Activated CD4-positive, alpha-beta T cell treated with anti-CD3 and anti-CD28 coated beads for 36 hours (primary cell): ENCODE measurements at regions of chr1 and their contacts with region 1.

Region 1: GRCh38 chr1:234065794-234066447 is 161.4 kb downstream of the SLC35F3 start:
- DNase-seq: peak; percentile 84
- ATAC-seq: peak; percentile 47
- H3K4me3 Mint-ChIP-seq: no peak overlapping the region
- H3K27ac Mint-ChIP-seq: no peak overlapping the region
- H3K4me1 Mint-ChIP-seq: no peaks in the 10 kb centered on the region
- H3K27me3 Mint-ChIP-seq: peaks cover 12% of the 10 kb centered on the region

Region 2: GRCh38 chr1:233364695-233365539 is 701.0 kb before region 1 on chr1:
- CTCF ChIA-PET with region 1: interaction called, 3 read pairs
- POLR2A ChIA-PET with region 1: no interaction called
- intact Hi-C with region 1: loop called in 1 of 2 experiments (anchors 10 kb)
- DNase-seq: no peak
- ATAC-seq: no peak
- H3K4me3 Mint-ChIP-seq: no peak overlapping the region
- H3K27ac Mint-ChIP-seq: no peak overlapping the region
- H3K4me1 Mint-ChIP-seq: no peaks in the 10 kb centered on the region
- H3K27me3 Mint-ChIP-seq: peaks cover 5% of the 10 kb centered on the region

Region 3: DNA sequence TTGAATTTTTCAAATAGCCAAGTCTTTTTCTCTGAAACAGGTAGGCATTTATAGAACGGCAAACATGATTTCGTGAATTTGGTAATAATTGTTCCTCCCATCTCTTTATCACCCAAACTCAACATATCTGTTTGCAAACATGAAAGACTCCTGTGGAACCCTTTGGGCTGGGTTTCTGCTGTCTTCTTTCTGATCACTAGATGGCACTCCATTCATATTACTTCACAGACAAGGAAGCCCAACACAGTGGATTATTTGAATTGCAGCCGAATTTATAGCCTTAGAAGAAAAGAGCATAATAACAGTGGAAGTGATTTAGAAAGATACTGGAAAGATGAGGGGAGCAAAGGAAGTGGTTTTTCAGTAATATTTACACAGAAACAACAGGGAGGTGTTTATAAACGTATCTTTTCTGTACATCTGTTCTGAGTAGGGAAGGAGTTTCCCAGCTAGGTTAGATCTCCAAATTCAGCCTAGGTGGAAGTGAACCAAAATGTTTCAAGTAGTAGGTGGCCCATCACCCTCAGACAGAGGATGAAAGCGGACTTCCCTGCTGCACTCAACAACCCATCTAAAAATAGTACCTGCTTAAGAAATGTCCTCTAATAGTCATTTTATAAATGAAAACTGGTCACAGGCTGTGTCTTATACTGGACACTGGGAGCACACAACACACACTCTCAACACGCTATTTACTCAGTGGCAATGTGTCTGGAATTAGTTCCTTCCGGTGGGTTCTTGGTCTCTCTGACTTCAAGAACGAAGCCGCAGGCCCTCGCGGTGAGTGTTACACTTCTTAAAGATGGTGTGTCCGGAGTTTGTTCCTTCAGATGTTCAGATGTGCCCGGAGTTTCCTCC is 670.8 kb before region 1 on chr1:
- CTCF ChIA-PET with region 1: interaction called, 5 read pairs
- POLR2A ChIA-PET with region 1: no interaction called
- intact Hi-C with region 1: loop called (anchors 1 to 2 kb)
- DNase-seq: peak; percentile 27
- ATAC-seq: peak; percentile 75
- H3K4me3 Mint-ChIP-seq: no peak overlapping the region
- H3K27ac Mint-ChIP-seq: no peak overlapping the region
- H3K4me1 Mint-ChIP-seq: no peaks in the 10 kb centered on the region
- H3K27me3 Mint-ChIP-seq: peaks cover 26% of the 10 kb centered on the region

Region 4: DNA sequence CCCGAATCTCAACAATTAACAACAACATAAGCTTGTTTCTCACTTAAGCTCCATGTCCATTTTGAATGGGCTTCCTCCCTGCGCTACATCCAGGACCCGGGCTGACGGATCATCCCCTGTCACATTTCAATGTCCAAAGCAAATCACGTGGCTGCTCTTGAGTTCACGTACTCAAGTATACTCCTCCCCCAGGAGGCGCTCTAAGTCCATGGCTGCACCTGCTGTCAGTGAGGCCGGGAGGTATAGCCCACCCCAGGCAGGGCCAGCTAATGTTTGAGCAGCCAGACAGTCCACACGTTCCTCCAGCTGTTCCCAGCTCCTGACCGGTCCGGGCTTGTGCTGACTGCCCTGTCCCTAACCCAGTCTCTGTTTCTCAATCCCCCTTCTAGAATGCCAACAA is 59.4 kb after region 1 on chr1:
- CTCF ChIA-PET with region 1: no interaction called
- POLR2A ChIA-PET with region 1: no interaction called
- intact Hi-C with region 1: no loop called
- DNase-seq: peak; percentile 73
- ATAC-seq: peak; percentile 73
- H3K4me3 Mint-ChIP-seq: no peak overlapping the region
- H3K27ac Mint-ChIP-seq: no peak overlapping the region
- H3K4me1 Mint-ChIP-seq: no peaks in the 10 kb centered on the region
- H3K27me3 Mint-ChIP-seq: peaks cover 27% of the 10 kb centered on the region